ENCODE measurements at regions of chr18 and their contacts with region 1.

Region 1: DNA sequence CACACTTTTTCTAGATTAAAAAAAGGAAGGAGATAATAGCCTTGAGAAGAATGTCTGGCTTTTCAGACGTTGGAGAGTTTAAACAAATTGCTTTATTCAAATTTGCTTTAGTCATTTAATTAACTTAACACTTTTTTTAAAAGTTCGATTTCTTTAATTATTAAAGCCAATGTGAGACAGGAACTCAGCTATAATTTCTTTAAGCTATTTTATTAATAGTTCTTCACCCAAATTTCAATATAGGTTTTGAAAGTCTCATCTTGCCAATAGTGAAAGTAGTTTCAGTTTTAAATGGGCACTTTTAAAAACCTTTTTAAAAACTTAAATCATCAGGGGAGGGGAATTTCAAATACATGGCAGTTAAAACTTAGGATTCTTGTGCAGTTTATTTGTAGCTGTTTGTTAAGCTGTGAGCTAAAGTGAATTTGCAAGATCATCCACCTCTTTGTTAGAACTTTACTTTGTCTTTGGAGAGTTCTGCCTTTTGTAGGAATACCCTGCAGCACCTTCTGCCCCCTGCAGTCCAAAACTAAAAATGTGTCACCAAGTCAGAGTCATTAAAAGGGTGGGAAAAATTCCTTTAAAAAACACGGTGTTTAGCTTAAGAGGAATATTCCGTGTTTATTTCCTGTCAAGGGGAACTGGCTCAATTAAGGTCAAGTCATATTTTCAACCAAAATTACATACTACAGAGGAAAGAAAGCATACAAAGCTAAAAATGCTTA is 4.6 kb downstream of the TGIF1 start:
- DNase-seq: no peak
- H3K4me3 ChIP-seq: peak overlapping the region; percentile 91
- H3K27ac ChIP-seq: peak overlapping the region; percentile 99
- H3K4me1 ChIP-seq: peaks cover 71% of the 10 kb centered on the region
- H3K27me3 ChIP-seq: no peaks in the 10 kb centered on the region
- CTCF ChIP-seq: peak; percentile 77

Region 2: GRCh38 chr18:3129053-3129864 is 325.3 kb before region 1 on chr18:
- intact Hi-C with region 1: no loop called
- DNase-seq: peak; percentile 77
- H3K4me3 ChIP-seq: no peak overlapping the region
- H3K27ac ChIP-seq: peak overlapping the region; percentile 7
- H3K4me1 ChIP-seq: peaks cover 37% of the 10 kb centered on the region
- H3K27me3 ChIP-seq: no peaks in the 10 kb centered on the region
- CTCF ChIP-seq: peak; percentile 83

Region 3: GRCh38 chr18:3194947-3195612 is 259.4 kb before region 1 on chr18:
- intact Hi-C with region 1: no loop called
- DNase-seq: no peak
- H3K4me3 ChIP-seq: peak overlapping the region; percentile 38
- H3K27ac ChIP-seq: peak overlapping the region; percentile 78
- H3K4me1 ChIP-seq: peaks cover 75% of the 10 kb centered on the region
- H3K27me3 ChIP-seq: no peaks in the 10 kb centered on the region
- CTCF ChIP-seq: no peak

Region 4: DNA sequence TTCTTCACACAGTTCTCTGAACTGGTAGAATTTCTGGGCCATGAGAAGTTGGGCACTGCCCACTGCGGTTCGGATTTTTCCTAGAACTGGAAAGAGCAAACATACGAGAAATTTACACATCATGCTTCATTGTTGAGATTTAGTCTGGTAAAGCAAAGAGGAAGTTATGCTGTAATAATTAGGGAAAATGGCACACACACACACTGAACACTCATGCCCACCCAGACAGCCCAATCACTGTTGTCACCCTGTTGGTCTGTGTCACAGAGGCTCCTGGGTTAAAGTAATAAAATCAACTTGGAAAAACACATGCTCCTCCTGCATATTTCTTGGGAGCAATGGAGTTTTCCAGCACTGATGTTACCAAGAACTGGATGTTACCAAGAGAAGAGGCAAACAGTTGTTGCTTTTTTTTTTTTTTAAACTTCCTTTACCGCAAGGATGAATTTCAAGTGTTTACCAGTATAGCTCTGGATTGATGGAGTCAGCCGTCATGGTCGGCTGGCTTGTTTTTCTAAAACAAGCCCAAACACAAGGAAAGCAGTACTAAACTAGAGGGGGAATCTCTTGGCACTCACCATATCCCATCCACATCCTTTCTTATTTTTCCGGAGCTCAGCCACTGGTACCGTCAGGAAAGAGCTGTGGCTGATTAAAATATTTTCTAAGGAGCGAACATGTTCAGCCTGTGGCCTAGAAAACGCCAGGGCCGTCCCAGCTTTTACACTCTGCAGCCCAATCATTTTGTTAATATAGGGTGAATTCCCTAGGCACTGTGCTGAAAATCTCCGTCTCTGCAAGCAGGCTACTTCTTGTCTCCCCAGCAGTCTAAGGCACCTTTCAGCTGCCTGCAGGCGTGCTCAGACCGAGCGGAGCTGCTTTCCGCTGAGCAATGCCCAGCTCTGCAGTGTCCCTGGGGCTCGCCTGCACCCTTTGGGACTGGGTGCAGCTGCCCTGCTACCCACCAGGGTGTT is 54.3 kb after region 1 on chr18:
- intact Hi-C with region 1: no loop called
- DNase-seq: no peak
- H3K4me3 ChIP-seq: no peak overlapping the region
- H3K27ac ChIP-seq: no peak overlapping the region
- H3K4me1 ChIP-seq: no peaks in the 10 kb centered on the region
- H3K27me3 ChIP-seq: peaks cover 4% of the 10 kb centered on the region
- CTCF ChIP-seq: no peak

Region 5: GRCh38 chr18:3593904-3594661 is 139.6 kb after region 1 on chr18:
- intact Hi-C with region 1: loop called (anchors 5 kb)
- DNase-seq: peak; percentile 80
- H3K4me3 ChIP-seq: peak overlapping the region; percentile 64
- H3K27ac ChIP-seq: peak overlapping the region; percentile 99
- H3K4me1 ChIP-seq: peaks cover 54% of the 10 kb centered on the region
- H3K27me3 ChIP-seq: no peaks in the 10 kb centered on the region
- CTCF ChIP-seq: peak; percentile 87

Measured in left ventricle myocardium inferior (tissue), 1 donor.